ENCODE measurements at regions of chr10 and their contacts with region 1.

Region 1: GRCh38 chr10:102120142-102120990 is at the start of gene LDB1:
- DNase-seq: peak; percentile 53 to 87 (median 73)
- ATAC-seq: peak; percentile 48 to 50
- H3K4me3 Mint-ChIP-seq: peak within 1 kb of the TSS; percentile 89 to 97 (median 94)
- H3K27ac Mint-ChIP-seq: peak within 1 kb of the TSS; percentile 97 to 99 (median 98)
- H3K4me1 Mint-ChIP-seq: peaks cover 36 to 65% (median 57%) of the 10 kb centered on the region in 4 donors
- H3K27me3 Mint-ChIP-seq: no peaks in the 10 kb centered on the region
- polyA plus RNA-seq, gene LDB1: 29.2 to 45.1 (median 40.7) TPM

Region 2: DNA sequence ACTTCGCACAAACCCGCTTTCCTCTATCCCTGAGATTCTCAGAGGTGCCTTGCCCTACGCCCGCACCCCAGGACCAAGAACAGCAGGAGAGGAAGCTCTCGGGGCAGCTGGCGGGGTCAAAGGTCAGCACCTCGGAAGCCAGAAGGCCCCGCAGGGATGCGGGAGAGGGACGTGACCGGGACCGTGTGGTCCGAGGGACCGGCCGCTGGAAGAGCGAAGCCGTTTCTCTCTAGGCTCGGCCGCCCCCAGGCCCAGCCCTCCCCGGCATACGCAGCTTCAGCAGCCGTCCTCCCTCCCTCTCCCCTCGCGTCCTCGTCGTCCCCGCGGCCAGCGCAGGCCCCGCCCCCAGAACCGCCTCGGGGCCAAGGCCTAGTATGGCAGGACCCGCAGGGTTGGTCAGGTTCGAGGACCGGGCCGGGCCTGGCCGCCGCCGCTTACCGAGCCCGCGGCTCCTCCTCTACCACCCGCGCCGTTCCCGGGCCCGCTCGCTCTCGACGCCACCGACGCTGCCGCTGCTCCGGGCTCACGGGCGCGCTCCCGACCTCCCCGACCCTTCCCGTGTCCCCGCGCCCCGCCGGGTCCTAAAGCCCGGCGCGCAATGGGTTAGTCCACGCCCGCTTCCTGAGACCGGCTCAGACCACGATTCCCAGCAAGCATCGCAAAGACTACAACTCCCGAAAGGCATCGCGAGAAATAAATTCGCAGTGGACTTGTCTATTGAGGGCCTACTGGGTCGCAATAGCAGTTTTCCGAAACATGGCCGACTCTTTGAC is 64.5 kb before region 1 on chr10 and contains the start of gene ARMH3:
- POLR2A ChIA-PET with region 1: interaction called, 10 read pairs
- DNase-seq: peak; percentile 72 to 93 (median 86)
- ATAC-seq: peak; percentile 93 to 98
- H3K4me3 Mint-ChIP-seq: peak within 1 kb of the TSS; percentile 90 to 99 (median 96)
- H3K27ac Mint-ChIP-seq: peak within 1 kb of the TSS; percentile 87 to 98 (median 97)
- H3K4me1 Mint-ChIP-seq: peaks cover 18 to 49% (median 46%) of the 10 kb centered on the region in 4 donors
- H3K27me3 Mint-ChIP-seq: no peaks in the 10 kb centered on the region
- polyA plus RNA-seq, gene ARMH3: 19.9 to 23.1 (median 21.7) TPM

Region 3: GRCh38 chr10:102132563-102133372 is 12.4 kb after region 1 on chr10 and contains the start of gene PPRC1:
- POLR2A ChIA-PET with region 1: interaction called, 32 read pairs
- DNase-seq: peak; percentile 91 to 98 (median 97)
- ATAC-seq: peak; percentile 93 to 94
- H3K4me3 Mint-ChIP-seq: peak within 1 kb of the TSS; percentile 96 to 100 (median 99)
- H3K27ac Mint-ChIP-seq: peak within 1 kb of the TSS; percentile 90 to 99 (median 98)
- H3K4me1 Mint-ChIP-seq: peaks cover 28 to 49% (median 44%) of the 10 kb centered on the region in 4 donors
- H3K27me3 Mint-ChIP-seq: no peaks in the 10 kb centered on the region
- polyA plus RNA-seq, gene PPRC1: 6.2 to 23.7 (median 13.5) TPM

Measured in naive thymus-derived CD8-positive, alpha-beta T cell (primary cell).